PC-3 (cell line): ENCODE measurements at regions of chr6 and their contacts with region 1.

Region 1: GRCh38 chr6:13336553-13336952 is 8.2 kb upstream of the TBC1D7 start:
- DNase-seq: peak; percentile 93
- ATAC-seq: peak; percentile 68
- H3K4me3 ChIP-seq: no peak overlapping the region
- H3K27ac ChIP-seq: no peak overlapping the region
- H3K4me1 ChIP-seq: peaks cover 9% of the 10 kb centered on the region
- H3K27me3 ChIP-seq: no peaks in the 10 kb centered on the region
- CTCF ChIP-seq: peak; percentile 91

Region 2: GRCh38 chr6:13454286-13455221 is 118.0 kb after region 1 on chr6:
- CTCF ChIA-PET with region 1: no interaction called
- POLR2A ChIA-PET with region 1: no interaction called
- intact Hi-C with region 1: loop called (anchors 1 kb)
- DNase-seq: peak; percentile 57
- ATAC-seq: peak; percentile 44
- H3K4me3 ChIP-seq: no peak overlapping the region
- H3K27ac ChIP-seq: peak overlapping the region; percentile 84
- H3K4me1 ChIP-seq: peaks cover 35% of the 10 kb centered on the region
- H3K27me3 ChIP-seq: no peaks in the 10 kb centered on the region
- CTCF ChIP-seq: peak; percentile 30; the same call in 1 of the 2 replicates

Region 3: DNA sequence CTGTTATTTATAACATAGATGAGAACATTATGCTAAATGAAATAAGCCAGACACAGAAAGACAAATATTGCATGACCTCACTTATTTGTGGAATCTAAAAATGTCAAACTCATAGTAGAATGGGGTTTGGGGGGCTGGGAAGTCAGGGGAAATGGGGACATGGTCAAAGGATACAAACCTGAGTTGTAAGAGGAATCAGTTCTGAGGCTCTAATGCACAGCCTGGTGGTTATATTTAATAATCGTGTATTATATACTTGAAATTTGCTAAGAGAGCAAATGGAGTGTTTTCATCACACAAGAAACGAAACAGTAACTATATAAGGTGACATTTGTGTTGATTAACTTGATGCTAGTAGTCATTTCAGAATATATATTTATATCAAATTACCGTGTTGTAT is 191.7 kb after region 1 on chr6:
- CTCF ChIA-PET with region 1: no interaction called
- POLR2A ChIA-PET with region 1: no interaction called
- intact Hi-C with region 1: loop called (anchors 1 kb)
- DNase-seq: peak; percentile 30
- ATAC-seq: no peak
- H3K4me3 ChIP-seq: no peak overlapping the region
- H3K27ac ChIP-seq: no peak overlapping the region
- H3K4me1 ChIP-seq: no peaks in the 10 kb centered on the region
- H3K27me3 ChIP-seq: no peaks in the 10 kb centered on the region
- CTCF ChIP-seq: peak; percentile 38; the same call in 1 of the 2 replicates

Region 4: GRCh38 chr6:13538084-13538483 is 201.5 kb after region 1 on chr6:
- CTCF ChIA-PET with region 1: interaction called, 8 read pairs
- POLR2A ChIA-PET with region 1: no interaction called
- intact Hi-C with region 1: loop called (anchors 1 kb)
- DNase-seq: peak; percentile 70
- ATAC-seq: peak; percentile 66
- H3K4me3 ChIP-seq: no peak overlapping the region
- H3K27ac ChIP-seq: no peak overlapping the region
- H3K4me1 ChIP-seq: no peaks in the 10 kb centered on the region
- H3K27me3 ChIP-seq: no peaks in the 10 kb centered on the region
- CTCF ChIP-seq: peak; percentile 72

Region 5: GRCh38 chr6:13574149-13574570 is 237.6 kb after region 1 on chr6:
- CTCF ChIA-PET with region 1: interaction called, 3 read pairs
- POLR2A ChIA-PET with region 1: no interaction called
- intact Hi-C with region 1: loop called (anchors 1 kb)
- DNase-seq: peak; percentile 95
- ATAC-seq: peak; percentile 81
- H3K4me3 ChIP-seq: peak overlapping the region; percentile 79
- H3K27ac ChIP-seq: peak overlapping the region; percentile 91
- H3K4me1 ChIP-seq: peaks cover 11% of the 10 kb centered on the region
- H3K27me3 ChIP-seq: no peaks in the 10 kb centered on the region
- CTCF ChIP-seq: peak; percentile 39

Region 6: DNA sequence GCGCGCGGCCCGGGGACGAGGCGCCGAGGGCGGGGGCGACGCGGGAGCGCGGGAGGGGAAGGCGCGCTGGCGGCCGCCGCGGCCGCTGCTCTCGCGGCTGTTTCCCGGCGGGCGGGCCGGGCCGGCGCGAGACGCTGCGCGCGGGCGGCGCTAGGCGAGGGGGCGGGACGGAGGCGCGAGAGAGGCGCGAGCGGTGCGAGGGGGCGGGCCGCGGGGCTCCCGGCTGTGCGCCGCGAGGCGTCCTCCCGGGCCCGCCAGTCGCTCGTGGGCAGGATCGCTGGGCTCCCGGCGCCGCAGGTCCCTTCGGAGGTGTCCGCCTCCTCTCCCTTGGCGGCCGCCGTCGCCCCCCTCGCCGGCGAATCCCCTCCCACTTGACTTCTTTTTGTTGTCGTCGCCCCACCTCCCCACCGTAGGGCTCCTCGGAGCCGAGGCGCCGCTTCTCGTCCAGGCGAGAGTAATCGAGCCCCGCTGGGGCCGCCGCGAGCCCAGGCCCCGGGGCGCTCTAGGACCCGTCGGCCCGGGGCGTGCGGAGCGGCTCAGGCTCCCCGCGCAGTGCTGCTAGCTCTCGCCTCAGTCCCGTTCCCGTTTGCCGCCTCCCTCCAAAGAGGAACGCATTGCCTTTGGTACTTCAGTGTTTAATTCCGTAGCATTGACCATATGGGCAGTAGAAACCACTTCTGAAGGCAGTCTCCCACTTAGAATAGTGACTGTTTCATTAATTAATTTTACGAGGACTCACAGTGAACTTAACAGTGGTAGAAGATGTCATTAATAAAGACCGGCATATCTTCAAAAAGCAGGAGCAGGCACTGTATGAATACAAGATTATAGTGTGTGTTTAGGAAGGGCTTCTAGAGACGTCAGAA is 375.4 kb after region 1 on chr6 and contains the start of gene RANBP9:
- CTCF ChIA-PET with region 1: no interaction called
- POLR2A ChIA-PET with region 1: no interaction called
- intact Hi-C with region 1: loop called (anchors 10 kb)
- DNase-seq: peak; percentile 88
- ATAC-seq: peak; percentile 78
- H3K4me3 ChIP-seq: peak within 1 kb of the TSS; percentile 87
- H3K27ac ChIP-seq: peak within 1 kb of the TSS; percentile 80
- H3K4me1 ChIP-seq: peaks cover 32% of the 10 kb centered on the region
- H3K27me3 ChIP-seq: no peaks in the 10 kb centered on the region
- CTCF ChIP-seq: no peak
- total RNA-seq, gene RANBP9: 25.8 and 27.9 TPM in 2 replicates

Region 7: DNA sequence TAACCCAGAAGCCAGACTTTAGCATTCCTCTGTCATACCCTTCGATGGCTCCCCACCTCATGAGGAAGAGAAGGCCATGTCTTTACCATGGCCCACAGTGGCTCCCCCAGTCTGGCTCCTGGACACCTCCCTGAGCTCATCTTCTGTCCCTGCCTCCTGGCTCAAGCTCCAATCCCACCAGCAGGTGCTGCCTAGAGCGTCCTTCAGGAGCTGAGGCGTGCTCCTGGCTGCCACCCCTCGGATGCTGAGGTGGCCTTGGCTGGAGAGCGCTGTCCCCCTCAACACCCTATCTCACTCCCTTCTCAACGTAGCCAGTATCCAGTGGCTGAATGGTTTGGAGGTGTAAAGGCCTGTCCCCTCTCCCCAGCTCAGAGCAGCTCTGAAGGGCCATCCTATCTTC is 422.5 kb after region 1 on chr6:
- CTCF ChIA-PET with region 1: no interaction called
- POLR2A ChIA-PET with region 1: no interaction called
- intact Hi-C with region 1: no loop called
- DNase-seq: no peak
- ATAC-seq: no peak
- H3K4me3 ChIP-seq: no peak overlapping the region
- H3K27ac ChIP-seq: no peak overlapping the region
- H3K4me1 ChIP-seq: no peaks in the 10 kb centered on the region
- H3K27me3 ChIP-seq: no peaks in the 10 kb centered on the region
- CTCF ChIP-seq: no peak